Right ventricle myocardium inferior (tissue), 1 donor: ENCODE measurements at regions of chr12 and their contacts with region 1.

Region 1: GRCh38 chr12:32302218-32303173 is 96.9 kb upstream of the FGD4 start:
- DNase-seq: peak; percentile 57
- ATAC-seq: no peak

Region 2: DNA sequence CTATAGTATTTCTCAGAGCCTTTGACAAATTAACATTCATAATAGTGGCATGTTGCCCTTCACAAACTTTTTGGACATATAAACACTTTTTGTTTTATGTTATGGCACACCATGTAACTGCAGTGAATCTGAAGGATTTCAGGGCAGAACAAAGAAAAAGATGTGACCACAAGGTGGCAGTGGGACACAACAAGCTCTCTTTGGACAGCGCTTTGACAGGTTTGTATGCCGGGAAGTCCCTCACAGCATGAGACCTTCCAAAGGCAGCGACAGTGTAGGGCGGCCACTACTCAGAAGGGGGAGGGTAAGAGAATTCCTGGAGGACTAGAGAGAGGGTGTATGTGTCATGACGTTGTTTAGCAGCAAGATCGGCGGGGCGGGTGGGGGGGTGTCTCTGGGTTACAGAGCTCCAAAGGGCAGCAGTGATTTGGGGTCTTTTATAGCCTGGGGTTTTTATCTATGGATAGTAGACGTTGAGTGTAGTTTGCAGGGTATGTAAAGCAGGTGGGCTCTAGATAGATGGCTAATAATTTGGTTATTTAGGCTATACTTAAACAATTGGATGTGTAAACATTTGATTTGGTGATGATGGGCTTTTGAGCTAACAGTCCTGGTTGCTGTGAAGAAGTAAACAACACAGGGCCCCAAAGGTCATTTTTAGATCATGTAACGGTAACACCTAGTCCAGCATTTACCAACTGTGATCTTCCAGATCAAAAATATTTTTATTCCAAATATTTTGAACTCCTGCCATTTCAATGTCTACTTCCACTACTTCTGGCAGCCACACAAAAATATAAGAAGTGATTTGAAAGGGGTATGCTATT is 620.1 kb before region 1 on chr12:
- intact Hi-C with region 1: loop called (anchors 5 kb)
- DNase-seq: no peak
- ATAC-seq: peak; percentile 68

Region 3: GRCh38 chr12:32061033-32061432 is 241.5 kb before region 1 on chr12:
- intact Hi-C with region 1: loop called (anchors 2 kb)
- DNase-seq: no peak
- ATAC-seq: no peak